Breast epithelium (tissue), 4 donors: ENCODE measurements at regions of chr5 and their contacts with region 1.

Region 1: GRCh38 chr5:180441563-180441962 is 52.6 kb upstream of the CNOT6 start:
- DNase-seq: no peak
- H3K4me3 ChIP-seq: no peak overlapping the region
- H3K27ac ChIP-seq: no peak overlapping the region
- H3K4me1 ChIP-seq: no peaks in the 10 kb centered on the region
- H3K27me3 ChIP-seq: no peaks in the 10 kb centered on the region
- CTCF ChIP-seq: no peak
- POLR2A ChIP-seq: no peak

Region 2: GRCh38 chr5:180395540-180396274 is 45.9 kb before region 1 on chr5:
- intact Hi-C with region 1: loop called (anchors 2 kb)
- DNase-seq: no peak
- H3K4me3 ChIP-seq: no peak overlapping the region
- H3K27ac ChIP-seq: no peak overlapping the region
- H3K4me1 ChIP-seq: no peaks in the 10 kb centered on the region
- H3K27me3 ChIP-seq: no peaks in the 10 kb centered on the region
- CTCF ChIP-seq: no peak
- POLR2A ChIP-seq: no peak

Region 3: GRCh38 chr5:180470966-180471582 is 29.5 kb after region 1 on chr5:
- intact Hi-C with region 1: no loop called
- DNase-seq: peak in 1 of 2 donors; percentile 41
- H3K4me3 ChIP-seq: no peak overlapping the region
- H3K27ac ChIP-seq: no peak overlapping the region
- H3K4me1 ChIP-seq: no peaks in the 10 kb centered on the region
- H3K27me3 ChIP-seq: no peaks in the 10 kb centered on the region
- CTCF ChIP-seq: peak; percentile 82 to 87 (median 86)
- POLR2A ChIP-seq: no peak

Region 4: DNA sequence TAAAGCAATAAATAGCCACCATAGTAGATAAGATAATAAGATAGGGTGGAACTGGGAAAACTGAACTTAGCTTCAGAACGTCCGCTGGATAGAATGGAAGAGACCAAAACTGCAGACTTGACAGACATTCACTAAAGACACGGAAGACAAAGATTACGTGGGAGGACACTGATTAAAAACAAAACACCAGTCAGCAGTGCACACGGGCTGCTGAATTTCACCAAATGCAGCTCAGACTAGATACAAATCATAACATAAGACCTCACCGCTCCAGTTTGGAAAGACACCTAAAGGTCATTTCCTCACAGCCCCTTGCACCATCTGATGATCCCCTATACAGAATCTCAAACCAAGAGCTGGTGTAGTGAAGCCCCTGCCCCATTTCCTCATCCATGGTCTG is 301.2 kb after region 1 on chr5:
- intact Hi-C with region 1: loop called (anchors 10 kb)
- DNase-seq: no peak
- H3K4me3 ChIP-seq: no peak overlapping the region
- H3K27ac ChIP-seq: no peak overlapping the region
- H3K4me1 ChIP-seq: no peaks in the 10 kb centered on the region
- H3K27me3 ChIP-seq: peaks cover 0 to 31% of the 10 kb centered on the region in 2 donors
- CTCF ChIP-seq: no peak
- POLR2A ChIP-seq: no peak